AG04449 (cell line): ENCODE measurements at regions of chr18 and their contacts with region 1.

Region 1: DNA sequence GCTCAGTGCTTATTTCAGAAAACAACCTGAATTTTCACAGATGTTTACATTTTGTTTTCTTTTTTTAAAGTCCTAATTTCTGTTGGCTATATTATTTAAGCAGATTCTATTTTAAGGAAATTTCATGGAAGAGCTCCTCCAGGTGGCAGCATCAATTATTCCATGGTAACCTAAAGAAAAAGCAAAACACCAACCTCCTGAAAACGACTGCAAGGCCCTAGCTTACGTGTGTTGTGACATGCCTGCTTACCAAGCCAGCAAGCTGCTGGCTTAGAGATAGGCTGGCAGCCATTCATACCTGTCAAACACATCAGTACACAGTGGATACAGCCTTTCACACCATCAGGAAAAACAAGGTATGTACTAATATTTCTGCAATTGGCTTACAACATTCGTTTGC is 64.9 kb downstream of the LPIN2 start:
- DNase-seq: peak; percentile 16
- H3K4me3 ChIP-seq: no peak overlapping the region
- CTCF ChIP-seq: peak; percentile 16

Region 2: GRCh38 chr18:2826581-2826980 is 121.5 kb before region 1 on chr18:
- CTCF ChIA-PET with region 1: no interaction called
- POLR2A ChIA-PET with region 1: no interaction called
- DNase-seq: no peak
- H3K4me3 ChIP-seq: no peak overlapping the region
- CTCF ChIP-seq: no peak

Region 3: DNA sequence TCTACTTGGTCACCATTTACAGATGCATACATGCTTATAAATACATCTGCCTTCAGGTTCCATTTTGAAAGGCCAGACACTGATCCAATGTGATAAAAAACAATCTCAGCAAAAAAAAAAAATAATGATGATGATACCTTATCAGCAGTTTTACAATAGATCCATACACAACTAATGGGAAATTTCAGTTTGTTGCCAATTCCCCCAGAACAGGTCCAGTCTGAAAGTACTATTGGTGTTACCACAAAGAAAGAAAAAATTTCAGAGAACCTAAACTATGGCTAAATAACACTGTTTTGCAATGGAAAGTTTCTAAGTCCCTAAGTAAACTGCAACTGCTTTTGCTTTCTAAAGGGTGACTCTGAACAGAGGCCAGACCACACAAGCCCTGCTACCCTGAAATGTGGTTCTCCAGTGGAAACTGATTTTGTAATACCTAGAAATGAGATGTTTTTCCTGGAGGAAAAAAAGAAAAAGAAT is 10.8 kb after region 1 on chr18:
- CTCF ChIA-PET with region 1: interaction called, 33 read pairs
- POLR2A ChIA-PET with region 1: no interaction called
- DNase-seq: peak; percentile 38
- H3K4me3 ChIP-seq: no peak overlapping the region
- CTCF ChIP-seq: no peak

Region 4: GRCh38 chr18:3104190-3105054 is 156.4 kb after region 1 on chr18:
- CTCF ChIA-PET with region 1: no interaction called
- POLR2A ChIA-PET with region 1: no interaction called
- DNase-seq: no peak
- H3K4me3 ChIP-seq: no peak overlapping the region
- CTCF ChIP-seq: no peak

Region 5: DNA sequence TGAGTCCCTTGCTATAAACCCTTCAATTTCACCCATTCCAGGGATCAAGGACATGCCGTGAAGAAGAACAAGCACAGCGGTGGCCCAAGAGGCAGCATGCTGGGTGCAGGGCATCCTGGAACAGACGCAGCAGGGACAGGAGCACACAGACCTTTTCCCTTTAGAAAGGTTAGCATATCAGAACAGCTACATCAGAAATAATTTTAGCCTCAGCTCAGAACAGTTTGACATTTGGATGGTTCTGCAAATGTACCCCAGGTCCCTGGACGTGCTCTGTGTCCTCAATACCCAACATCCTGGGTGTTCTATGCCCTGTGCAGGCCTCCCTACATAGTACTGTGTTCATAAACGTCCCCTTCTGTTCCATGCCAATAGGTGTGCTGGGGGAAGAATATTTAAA is 191.4 kb after region 1 on chr18:
- CTCF ChIA-PET with region 1: no interaction called
- POLR2A ChIA-PET with region 1: no interaction called
- DNase-seq: no peak
- H3K4me3 ChIP-seq: no peak overlapping the region
- CTCF ChIP-seq: no peak